BJ (cell line): ENCODE measurements at regions of chr1 and their contacts with region 1.

Region 1: DNA sequence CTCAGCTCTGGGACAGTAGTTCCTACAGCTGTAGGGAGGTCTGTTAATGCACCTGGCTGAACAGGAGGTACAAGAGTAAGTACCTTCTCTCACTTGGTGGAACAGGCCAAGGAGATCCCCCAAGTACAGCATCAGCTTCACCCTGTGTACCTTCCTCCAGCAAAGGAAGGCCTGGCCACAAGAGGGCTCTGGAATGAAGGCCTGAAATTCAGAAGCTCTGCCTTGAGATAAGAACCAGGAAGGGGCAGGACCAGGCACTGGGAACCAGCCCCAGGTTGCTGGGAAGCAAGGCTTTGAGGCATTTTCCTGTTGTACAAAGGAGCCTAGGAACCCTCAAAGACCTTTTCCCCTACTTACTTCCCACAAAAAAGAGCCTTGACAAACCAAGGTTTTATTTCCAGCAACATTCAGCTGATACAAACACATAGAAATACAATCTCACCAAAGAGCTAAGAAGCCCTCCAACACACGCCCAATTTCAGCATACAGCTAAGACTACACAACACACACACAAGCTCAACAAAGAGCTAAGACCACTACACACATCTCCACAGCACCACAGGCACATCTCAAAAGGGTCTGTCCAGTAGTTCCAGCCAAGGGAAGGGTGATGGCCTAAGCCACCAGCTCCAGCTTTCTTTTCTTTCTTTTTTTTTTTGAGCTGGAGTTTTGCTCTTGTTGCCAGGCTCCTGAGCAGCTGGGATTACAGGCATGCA is 23.5 kb downstream of the F11R start:
- DNase-seq: no peak
- H3K4me3 ChIP-seq: no peak overlapping the region
- H3K27me3 ChIP-seq: no peaks in the 10 kb centered on the region; the same call in 1 of the 2 replicates
- CTCF ChIP-seq: peak; percentile 78

Region 2: DNA sequence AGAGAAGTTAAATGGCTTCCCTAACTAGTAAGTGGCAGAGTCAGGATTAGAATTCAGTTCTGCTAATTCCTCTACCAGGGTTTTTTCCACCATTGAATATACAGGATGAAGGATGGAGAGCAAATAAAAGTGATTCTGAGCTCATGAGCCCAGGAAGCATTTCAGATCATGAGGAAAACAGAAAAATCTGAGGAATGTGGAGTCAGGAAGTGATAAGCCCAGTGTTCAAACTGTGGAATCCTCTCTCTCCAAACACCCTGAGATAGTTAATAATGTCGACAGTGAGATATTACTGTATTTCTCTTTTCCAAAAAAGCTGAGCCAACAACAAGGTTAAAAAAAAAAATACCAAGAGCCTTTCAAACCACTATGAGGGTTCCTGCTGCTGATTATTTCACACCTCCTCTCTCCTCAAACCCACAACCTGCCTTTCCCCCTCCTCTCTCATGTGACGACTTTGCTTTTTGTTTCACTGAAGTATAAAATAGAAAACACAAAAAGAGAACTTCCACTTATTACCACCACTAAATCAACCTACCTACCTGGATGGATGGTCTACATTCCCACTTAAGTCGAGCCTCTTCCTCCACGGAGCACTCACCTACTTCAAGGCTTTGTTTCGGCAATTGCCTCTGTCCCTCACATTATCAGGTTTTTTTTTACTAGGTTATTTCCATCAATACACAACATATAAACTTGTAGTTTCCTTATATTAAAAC is 359.5 kb before region 1 on chr1:
- CTCF ChIA-PET with region 1: no interaction called
- POLR2A ChIA-PET with region 1: no interaction called
- DNase-seq: no peak
- H3K4me3 ChIP-seq: no peak overlapping the region
- H3K27me3 ChIP-seq: no peaks in the 10 kb centered on the region
- CTCF ChIP-seq: no peak

Region 3: GRCh38 chr1:161008924-161009510 is 11.5 kb after region 1 on chr1:
- CTCF ChIA-PET with region 1: interaction called, 25 read pairs
- POLR2A ChIA-PET with region 1: interaction called, 5 read pairs
- DNase-seq: no peak
- H3K4me3 ChIP-seq: no peak overlapping the region
- H3K27me3 ChIP-seq: no peaks in the 10 kb centered on the region
- CTCF ChIP-seq: no peak

Region 4: DNA sequence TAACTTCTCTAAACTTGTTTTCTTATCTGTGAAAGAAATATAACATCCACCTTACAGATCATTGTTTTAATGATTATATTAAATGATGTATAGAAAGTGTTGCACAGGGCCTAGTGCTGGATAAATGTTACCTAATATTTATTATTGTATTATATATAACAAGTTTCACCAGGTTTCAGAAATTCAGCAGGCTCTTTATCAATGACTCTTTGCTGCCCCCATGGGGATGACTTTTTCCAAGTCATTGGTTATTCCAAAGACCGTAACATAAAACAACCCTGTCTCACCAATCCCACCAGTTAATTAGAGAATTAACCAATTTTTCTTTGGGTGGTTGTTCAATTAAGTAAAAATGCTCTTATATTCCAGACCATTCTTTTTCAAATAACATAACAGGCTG is 142.3 kb after region 1 on chr1:
- CTCF ChIA-PET with region 1: interaction called, 36 read pairs
- POLR2A ChIA-PET with region 1: no interaction called
- DNase-seq: no peak
- H3K4me3 ChIP-seq: no peak overlapping the region
- H3K27me3 ChIP-seq: no peaks in the 10 kb centered on the region
- CTCF ChIP-seq: peak; percentile 63